Heart left ventricle (tissue), 16 donors: ENCODE measurements at regions of chr20 and their contacts with region 1.

Region 1: DNA sequence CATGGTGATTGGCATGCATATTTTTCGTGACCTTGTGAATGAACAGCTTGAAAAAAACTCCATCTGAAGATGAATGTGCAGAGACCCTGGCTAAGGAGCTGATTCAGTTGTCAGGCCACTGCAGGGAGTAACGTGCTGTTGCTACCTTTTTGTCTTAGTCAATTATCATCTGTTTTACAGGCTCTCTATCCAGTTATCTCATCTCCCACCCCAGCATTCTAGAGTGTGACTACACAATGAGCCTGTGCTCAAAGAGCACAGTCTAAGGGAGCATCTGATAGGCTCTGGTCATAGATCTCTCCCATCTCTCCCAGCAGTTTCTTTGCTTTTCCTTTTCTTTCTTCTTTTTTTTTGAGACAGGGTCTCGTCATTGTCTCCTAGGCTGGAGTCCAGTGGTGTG is 45.5 kb downstream of the NDRG3 start:
- DNase-seq: no peak
- ATAC-seq: no peak
- H3K4me3 ChIP-seq: no peak overlapping the region
- H3K27ac ChIP-seq: no peak overlapping the region
- H3K4me1 ChIP-seq: peaks cover 0 to 14% (median 0%) of the 10 kb centered on the region in 12 donors
- H3K27me3 ChIP-seq: no peaks in the 10 kb centered on the region
- CTCF ChIP-seq: no peak
- POLR2A ChIP-seq: no peak

Region 2: DNA sequence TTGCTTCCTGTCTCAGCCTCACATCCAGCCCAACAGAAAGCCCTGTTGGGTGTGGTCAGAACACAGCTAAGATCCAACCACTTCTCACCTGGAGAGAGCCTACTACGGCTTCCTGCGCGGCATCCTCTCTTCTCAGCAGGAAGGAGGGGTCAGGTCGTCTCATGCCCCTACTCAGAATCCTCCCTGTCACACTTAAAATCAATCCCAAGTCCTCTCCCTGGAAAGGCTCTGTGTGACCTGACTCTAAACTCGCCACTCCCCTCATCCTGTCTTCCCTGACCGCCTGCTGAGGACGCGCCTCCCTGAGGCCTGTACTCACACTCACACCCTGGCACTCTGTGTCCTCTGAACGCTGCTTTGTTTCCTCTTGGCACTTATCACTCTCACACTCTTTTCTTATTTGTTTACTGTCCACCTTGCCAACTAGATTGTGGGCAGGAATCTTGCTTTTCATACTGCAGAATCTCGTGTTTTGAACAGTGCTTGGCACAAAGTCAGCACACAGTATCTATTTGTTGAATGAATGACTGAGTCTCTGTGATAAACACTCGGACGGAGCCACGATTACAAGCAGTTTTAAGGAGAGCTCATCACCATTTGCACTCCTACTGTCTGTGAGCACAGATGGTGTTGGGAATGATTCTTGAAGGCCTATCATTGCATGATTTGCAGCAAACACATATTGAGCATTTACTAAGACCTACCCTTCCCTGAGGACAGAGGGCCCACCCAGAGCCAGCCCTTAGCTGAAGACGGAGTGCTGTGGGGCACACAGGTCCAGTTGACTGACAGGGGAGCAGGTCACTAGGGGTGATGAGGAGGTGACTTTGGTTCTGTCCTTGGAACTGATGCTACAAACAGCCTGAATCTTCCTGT is 76.1 kb before region 1 on chr20:
- intact Hi-C with region 1: no loop called
- DNase-seq: peak in 1 of 5 donors; percentile 43
- ATAC-seq: peak; percentile 82 to 95 (median 83)
- H3K4me3 ChIP-seq: no peak overlapping the region
- H3K27ac ChIP-seq: peak overlapping the region in 1 of 12 donors; percentile 10
- H3K4me1 ChIP-seq: peaks cover 0 to 10% (median 2%) of the 10 kb centered on the region in 12 donors
- H3K27me3 ChIP-seq: no peaks in the 10 kb centered on the region
- CTCF ChIP-seq: no peak
- POLR2A ChIP-seq: no peak

Region 3: GRCh38 chr20:36666181-36666740 is 34.2 kb before region 1 on chr20:
- intact Hi-C with region 1: loop called in 1 of 10 experiments (anchors 5 kb)
- DNase-seq: no peak
- ATAC-seq: no peak
- H3K4me3 ChIP-seq: no peak overlapping the region
- H3K27ac ChIP-seq: no peak overlapping the region
- H3K4me1 ChIP-seq: no peaks in the 10 kb centered on the region
- H3K27me3 ChIP-seq: no peaks in the 10 kb centered on the region
- CTCF ChIP-seq: peak in 5 of 12 donors; percentile 9 to 32 (median 28)
- POLR2A ChIP-seq: no peak

Region 4: GRCh38 chr20:37152284-37152683 is 451.8 kb after region 1 on chr20:
- intact Hi-C with region 1: no loop called
- DNase-seq: no peak
- ATAC-seq: no peak
- H3K4me3 ChIP-seq: no peak overlapping the region
- H3K27ac ChIP-seq: no peak overlapping the region
- H3K4me1 ChIP-seq: no peaks in the 10 kb centered on the region
- H3K27me3 ChIP-seq: no peaks in the 10 kb centered on the region
- CTCF ChIP-seq: no peak
- POLR2A ChIP-seq: no peak